Gastrocnemius medialis (tissue), 4 donors: ENCODE measurements at regions of chr9 and their contacts with region 1.

Region 1: GRCh38 chr9:133113949-133114885 is 6.8 kb downstream of the RALGDS start:
- DNase-seq: peak; percentile 86 to 94
- ATAC-seq: peak; percentile 77 to 78
- H3K4me3 ChIP-seq: peak overlapping the region; percentile 4 to 29 (median 19)
- H3K27ac ChIP-seq: peak overlapping the region; percentile 85 to 98 (median 93)
- H3K4me1 ChIP-seq: peaks cover 72 to 74% of the 10 kb centered on the region in 2 donors
- H3K27me3 ChIP-seq: no peaks in the 10 kb centered on the region
- CTCF ChIP-seq: peak in 2 of 5 experiments; percentile 14 to 22
- POLR2A ChIP-seq: peak; percentile 52 to 69

Region 2: DNA sequence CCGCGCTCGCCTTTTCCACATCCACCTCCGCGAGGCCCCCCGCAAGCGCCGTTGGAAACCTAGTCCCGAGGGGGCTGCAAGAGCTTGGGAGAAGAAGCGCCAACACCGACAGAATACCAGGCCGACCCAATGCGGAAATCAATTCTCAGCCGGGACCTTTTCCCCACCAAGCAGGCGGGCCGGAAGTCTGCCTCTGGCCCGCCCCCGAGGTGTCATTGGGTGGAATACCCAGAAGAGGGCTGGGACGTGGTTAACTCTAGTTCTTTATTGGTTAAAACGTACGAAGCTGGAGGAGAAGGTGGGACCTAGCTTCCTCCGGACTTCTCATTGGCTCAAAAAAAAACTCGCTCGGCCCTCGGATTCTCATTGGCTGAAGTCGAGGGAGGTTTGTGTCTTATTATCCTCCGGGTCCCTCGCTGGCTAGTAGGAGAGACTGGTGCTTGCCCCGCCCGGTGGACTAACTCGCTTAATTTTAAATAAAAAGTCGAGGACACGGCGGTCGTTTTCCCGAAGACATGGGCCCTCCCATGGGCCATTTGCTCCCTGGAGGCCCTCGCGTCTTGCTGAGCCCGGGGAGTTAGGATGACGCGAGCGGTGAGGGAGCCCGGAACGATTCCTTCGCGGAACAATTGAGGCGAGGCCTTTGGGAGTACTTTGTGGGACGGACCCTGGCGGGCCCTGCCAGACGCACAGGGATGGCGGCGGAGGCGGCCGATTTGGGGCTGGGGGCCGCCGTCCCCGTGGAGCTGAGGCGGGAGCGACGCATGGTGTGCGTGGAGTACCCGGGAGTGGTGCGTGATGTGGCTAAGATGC is 83.7 kb before region 1 on chr9 and contains the start of gene GTF3C5:
- in situ Hi-C with region 1: no loop called
- intact Hi-C with region 1: no loop called
- DNase-seq: peak; percentile 92 to 94
- ATAC-seq: peak; percentile 99
- H3K4me3 ChIP-seq: peak within 1 kb of the TSS; percentile 85 to 97 (median 93)
- H3K27ac ChIP-seq: peak within 1 kb of the TSS; percentile 93 to 94 (median 94)
- H3K4me1 ChIP-seq: peaks cover 32 to 43% of the 10 kb centered on the region in 2 donors
- H3K27me3 ChIP-seq: no peaks in the 10 kb centered on the region
- CTCF ChIP-seq: peak in 2 of 5 experiments; percentile 16 to 30
- POLR2A ChIP-seq: peak; percentile 65 to 76
- total RNA-seq, gene GTF3C5: 48.1 to 55.3 (median 51.5) TPM

Region 3: DNA sequence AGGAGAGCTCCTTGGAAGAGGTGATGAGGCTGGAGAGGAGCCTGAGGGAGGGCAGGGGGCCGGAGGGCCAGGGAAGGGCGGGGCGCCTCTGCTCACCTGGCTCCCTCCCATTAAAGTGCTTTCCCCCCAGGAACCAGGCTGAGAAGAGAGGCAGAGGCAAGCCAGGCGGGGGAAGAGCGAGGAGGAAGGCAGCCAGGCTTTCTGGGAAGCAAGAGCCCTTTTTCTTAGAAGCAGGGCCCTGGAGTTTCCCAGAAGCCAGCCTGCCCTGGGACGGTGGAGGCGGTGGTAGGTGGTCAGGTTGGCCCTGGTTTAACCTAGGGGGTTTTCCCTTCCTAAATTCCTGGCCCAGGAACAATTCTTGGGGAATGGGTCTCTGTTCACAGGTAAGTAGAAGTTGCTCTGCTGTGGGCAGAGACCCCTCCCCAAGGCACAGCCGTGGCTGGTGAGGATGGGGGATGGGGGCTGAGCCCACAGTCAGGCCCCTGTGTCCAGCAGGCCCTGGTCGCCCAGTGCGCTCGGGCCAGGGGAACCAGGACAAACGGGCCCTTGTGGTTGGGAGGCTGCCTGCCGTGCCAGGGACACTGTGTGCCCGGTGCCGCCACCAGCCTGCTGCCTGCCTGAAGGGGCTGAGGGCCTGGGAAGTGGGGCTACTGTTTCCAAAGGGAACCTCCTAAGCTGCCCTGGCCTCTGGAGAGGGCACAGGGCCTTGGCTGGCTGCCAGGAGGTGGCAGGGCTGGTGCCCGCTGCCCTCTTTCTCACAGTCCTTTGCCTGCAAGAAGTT is 23.4 kb after region 1 on chr9:
- in situ Hi-C with region 1: loop called in 1 of 4 experiments (anchors 5 kb)
- intact Hi-C with region 1: loop called (anchors 1 kb)
- DNase-seq: peak; percentile 88 to 92
- ATAC-seq: peak; percentile 31 to 55
- H3K4me3 ChIP-seq: peak overlapping the region in 1 of 4 donors; percentile 6
- H3K27ac ChIP-seq: peak overlapping the region; percentile 90 to 100 (median 98)
- H3K4me1 ChIP-seq: peaks cover 61 to 76% of the 10 kb centered on the region in 2 donors
- H3K27me3 ChIP-seq: no peaks in the 10 kb centered on the region
- CTCF ChIP-seq: no peak
- POLR2A ChIP-seq: peak in 1 of 2 donors; percentile 0

Region 4: DNA sequence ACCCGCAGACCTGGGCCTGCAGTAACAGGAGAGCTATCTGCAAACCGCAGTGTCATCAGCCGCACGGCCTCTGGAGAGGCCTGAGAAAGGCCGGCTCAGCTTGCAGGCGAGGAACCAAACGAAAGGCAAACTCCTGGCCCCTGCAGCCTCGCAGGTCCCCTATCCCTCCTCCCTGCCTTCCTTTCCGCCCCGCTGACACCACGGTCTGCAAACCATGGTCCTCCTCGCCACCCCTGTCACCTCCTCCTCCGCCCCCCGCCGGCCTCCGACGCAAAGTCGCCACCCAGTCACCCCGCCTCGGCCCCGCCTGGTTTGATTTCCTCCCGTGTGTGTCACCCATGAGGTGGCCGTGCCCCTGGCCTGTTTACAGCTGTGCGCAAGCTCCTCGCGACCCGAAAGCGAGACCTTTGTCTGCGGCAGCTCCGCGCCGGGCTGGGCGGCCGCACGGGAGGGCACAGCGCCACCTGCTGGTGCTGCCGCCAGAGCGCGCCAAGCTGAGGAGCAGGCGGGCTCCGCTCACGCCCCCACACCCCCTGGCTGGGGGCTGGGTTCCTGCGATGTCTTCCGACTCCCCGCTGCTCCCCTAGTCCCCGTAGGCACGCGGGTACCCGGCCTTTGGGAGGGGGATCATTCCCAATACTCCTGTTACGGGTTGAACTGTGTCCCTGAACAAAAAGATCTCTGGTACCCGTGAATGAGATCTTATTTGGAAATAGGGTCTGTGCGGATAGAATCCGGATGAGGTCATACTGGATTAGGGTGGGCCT is 30.1 kb after region 1 on chr9:
- in situ Hi-C with region 1: loop called in 3 of 4 experiments (anchors 5 kb)
- intact Hi-C with region 1: loop called (anchors 1 kb)
- DNase-seq: peak; percentile 87
- ATAC-seq: peak; percentile 52 to 65
- H3K4me3 ChIP-seq: peak overlapping the region; percentile 52 to 55 (median 53)
- H3K27ac ChIP-seq: peak overlapping the region; percentile 79 to 100 (median 90)
- H3K4me1 ChIP-seq: peaks cover 41 to 44% of the 10 kb centered on the region in 2 donors
- H3K27me3 ChIP-seq: no peaks in the 10 kb centered on the region
- CTCF ChIP-seq: peak; percentile 96 to 100 (median 99)
- POLR2A ChIP-seq: peak; percentile 71 to 90